ENCODE measurements at regions of chr20 and their contacts with region 1.

Region 1: GRCh38 chr20:53738039-53738944 is 144.7 kb upstream of the ZNF217 start:
- DNase-seq: peak; percentile 55 to 73 (median 68)
- ATAC-seq: peak; percentile 59 to 88 (median 86)
- H3K4me3 ChIP-seq: peak overlapping the region in 9 of 12 donors; percentile 0 to 29 (median 12)
- H3K27ac ChIP-seq: peak overlapping the region in 11 of 12 donors; percentile 47 to 82 (median 67)
- H3K4me1 ChIP-seq: peaks cover 3 to 64% (median 40%) of the 10 kb centered on the region in 12 donors
- H3K27me3 ChIP-seq: no peaks in the 10 kb centered on the region
- CTCF ChIP-seq: no peak
- POLR2A ChIP-seq: no peak

Region 2: DNA sequence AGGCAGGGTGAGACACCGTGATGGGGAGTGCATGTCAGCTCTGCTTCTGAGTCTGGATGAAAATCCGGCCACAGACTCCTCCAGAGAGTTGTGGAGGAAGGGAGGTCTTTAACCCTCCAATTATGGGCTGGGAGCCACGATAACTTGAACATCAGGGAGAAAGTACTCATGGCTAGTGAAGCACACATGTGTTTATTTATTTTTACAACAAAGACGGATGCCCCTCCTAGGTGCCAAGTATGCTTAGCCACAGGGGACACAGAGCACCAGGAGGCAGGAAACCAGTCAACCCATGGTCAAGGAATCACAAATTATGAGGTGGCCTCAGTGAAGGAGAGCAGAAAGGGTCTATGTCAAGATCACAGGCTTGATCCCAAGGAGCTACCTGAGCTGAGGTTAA is 198.8 kb before region 1 on chr20:
- intact Hi-C with region 1: no loop called
- DNase-seq: no peak
- ATAC-seq: no peak
- H3K4me3 ChIP-seq: no peak overlapping the region
- H3K27ac ChIP-seq: no peak overlapping the region
- H3K4me1 ChIP-seq: no peaks in the 10 kb centered on the region
- H3K27me3 ChIP-seq: no peaks in the 10 kb centered on the region
- CTCF ChIP-seq: no peak
- POLR2A ChIP-seq: no peak

Region 3: DNA sequence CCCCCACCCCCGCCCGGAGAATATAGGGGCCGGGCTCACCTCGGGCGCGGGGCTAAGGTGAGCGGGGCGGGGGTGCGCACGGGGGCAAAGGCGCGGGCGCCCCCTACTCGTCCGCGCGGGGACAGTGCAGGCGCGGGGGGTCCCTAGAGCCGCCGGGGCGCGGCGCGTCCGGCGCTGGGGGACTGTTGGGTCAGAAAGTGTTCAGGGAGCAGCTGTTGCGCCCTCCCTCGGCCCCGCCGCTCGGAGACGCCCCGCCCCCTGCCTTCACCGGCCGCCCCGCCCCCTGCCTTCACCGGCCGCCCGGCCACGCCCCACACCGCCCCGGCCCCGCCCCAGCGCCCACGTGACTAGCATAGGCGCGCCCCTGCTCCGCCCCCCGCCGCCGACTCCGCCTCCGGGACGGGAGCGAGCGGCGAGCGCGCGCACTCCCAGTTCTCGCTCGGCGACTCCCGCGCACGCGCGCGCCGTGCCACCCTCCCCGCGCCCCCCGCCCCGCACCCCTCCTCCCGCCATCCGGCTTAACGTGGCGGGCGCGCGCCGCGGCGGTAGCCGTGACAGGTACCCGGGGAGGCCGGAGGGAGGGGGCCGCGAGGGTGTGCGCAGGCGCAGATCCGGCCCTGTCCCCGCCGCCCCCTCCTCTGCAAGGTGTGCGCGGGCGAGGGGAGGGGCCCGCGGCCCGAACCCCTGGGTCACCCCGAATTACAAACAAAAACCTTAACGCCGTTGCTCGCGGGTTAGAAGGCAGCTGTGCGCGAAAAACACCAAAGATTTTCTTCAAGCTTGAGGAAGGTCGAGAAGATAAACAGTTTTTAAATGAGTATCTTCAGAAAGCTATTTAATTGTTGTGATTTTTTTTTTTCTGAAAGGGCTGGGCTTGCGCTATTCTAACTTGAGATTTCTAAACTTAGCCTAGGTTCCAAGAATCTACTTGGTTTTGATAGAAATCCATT is 143.9 kb before region 1 on chr20:
- intact Hi-C with region 1: loop called in 4 of 10 experiments (anchors 5 to 10 kb)
- DNase-seq: peak; percentile 96 to 100 (median 98)
- ATAC-seq: peak; percentile 88 to 96 (median 90)
- H3K4me3 ChIP-seq: peak overlapping the region; percentile 63 to 96 (median 94)
- H3K27ac ChIP-seq: peak overlapping the region; percentile 90 to 100 (median 99)
- H3K4me1 ChIP-seq: peaks cover 0 to 57% (median 18%) of the 10 kb centered on the region in 12 donors
- H3K27me3 ChIP-seq: no peaks in the 10 kb centered on the region
- CTCF ChIP-seq: peak in 11 of 12 donors; percentile 12 to 59 (median 30)
- POLR2A ChIP-seq: peak; percentile 64 to 85

Region 4: GRCh38 chr20:53623454-53624211 is 114.7 kb before region 1 on chr20:
- intact Hi-C with region 1: loop called in 2 of 10 experiments (anchors 10 kb)
- DNase-seq: peak in 4 of 5 donors; percentile 67 to 76 (median 72)
- ATAC-seq: peak; percentile 84 to 94 (median 92)
- H3K4me3 ChIP-seq: peak overlapping the region in 11 of 12 donors; percentile 26 to 57 (median 51)
- H3K27ac ChIP-seq: peak overlapping the region; percentile 71 to 91 (median 82)
- H3K4me1 ChIP-seq: peaks cover 12 to 60% (median 27%) of the 10 kb centered on the region in 12 donors
- H3K27me3 ChIP-seq: no peaks in the 10 kb centered on the region
- CTCF ChIP-seq: peak in 1 of 12 donors; percentile 22
- POLR2A ChIP-seq: peak in 1 of 2 donors; percentile 34

Region 5: DNA sequence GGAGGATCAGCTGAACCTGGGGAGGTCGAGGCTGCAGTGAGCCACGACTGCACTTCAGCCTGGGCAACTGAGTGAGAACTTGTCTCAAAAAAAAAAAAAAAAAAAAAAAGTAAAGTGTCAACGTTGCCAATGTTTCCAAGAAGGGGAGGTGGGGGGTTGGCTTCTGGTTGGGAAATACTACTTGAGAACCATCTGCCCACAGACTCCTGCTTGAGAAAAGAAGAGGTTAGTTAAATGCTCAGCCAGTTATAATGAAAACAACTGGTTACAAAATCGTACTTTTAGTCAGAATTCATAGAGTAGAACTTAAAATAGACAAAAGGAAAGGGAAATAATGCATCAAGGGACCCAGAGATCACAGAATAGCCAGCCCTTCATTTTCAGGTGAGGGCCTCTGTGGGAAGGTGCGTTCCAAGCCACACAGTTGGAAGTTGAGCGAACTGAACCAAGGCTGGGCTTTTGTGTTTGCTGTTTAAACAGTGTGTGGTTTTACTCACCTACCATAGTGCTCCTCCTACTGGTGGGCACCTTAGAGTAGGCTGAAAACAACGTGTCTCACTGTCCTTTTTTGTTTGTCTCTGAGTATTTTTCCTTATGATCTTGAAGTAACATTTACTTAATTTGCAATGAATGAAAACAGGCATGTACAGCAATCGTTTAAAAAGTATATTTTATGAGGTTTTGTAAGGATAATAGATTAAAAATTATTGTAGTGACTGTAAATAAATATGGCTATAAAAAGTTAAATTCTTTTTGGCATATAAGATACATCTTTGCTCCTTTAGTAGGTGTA is 131.4 kb after region 1 on chr20:
- intact Hi-C with region 1: loop called in 1 of 10 experiments (anchors 5 kb)
- DNase-seq: peak in 4 of 5 donors; percentile 54 to 67 (median 61)
- ATAC-seq: peak; percentile 72 to 94 (median 87)
- H3K4me3 ChIP-seq: peak overlapping the region in 1 of 12 donors; percentile 13
- H3K27ac ChIP-seq: peak overlapping the region in 4 of 12 donors; percentile 20 to 65 (median 52)
- H3K4me1 ChIP-seq: peaks cover 0 to 62% (median 22%) of the 10 kb centered on the region in 12 donors
- H3K27me3 ChIP-seq: no peaks in the 10 kb centered on the region
- CTCF ChIP-seq: peak; percentile 60 to 86 (median 76)
- POLR2A ChIP-seq: no peak

Region 6: DNA sequence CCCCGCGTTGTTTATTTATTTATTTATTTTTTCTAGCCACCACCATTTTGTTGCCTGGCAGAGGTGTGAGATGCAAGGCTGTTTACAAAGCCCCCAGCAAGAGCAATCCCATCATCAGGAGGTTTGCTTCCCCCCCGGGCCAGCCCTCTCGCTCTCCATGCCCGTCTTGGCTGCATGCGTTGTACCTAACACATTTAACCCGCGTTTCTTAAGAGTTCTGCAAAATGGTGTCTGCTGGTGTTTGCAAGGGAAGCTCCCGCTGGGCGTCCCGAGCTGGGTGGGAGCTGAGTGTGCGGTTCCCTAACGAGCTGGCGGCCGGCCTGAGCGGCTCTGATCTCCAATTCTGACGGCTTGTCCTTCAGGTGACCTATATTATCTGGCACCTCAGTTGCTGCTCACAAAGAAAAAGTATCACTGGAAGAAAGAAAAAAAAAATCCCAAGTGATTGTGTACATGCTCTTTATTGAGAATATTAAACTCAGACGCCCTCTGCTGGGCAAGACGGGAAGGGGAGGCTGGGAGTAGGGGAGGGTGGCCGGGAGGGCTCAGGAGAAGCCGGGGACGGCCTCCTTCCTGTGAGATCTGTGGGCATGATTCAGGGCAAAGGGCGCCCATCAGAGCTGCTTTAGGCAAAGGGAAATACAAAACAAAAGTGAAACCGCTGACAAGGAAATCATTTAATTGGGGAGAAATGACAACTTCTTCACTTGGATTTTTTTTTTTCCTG is 177.3 kb after region 1 on chr20:
- intact Hi-C with region 1: loop called in 1 of 10 experiments (anchors 5 kb)
- DNase-seq: peak; percentile 94 to 97 (median 95)
- ATAC-seq: peak; percentile 86 to 92 (median 90)
- H3K4me3 ChIP-seq: peak overlapping the region; percentile 53 to 80 (median 66)
- H3K27ac ChIP-seq: peak overlapping the region; percentile 79 to 94 (median 88)
- H3K4me1 ChIP-seq: peaks cover 0 to 46% (median 29%) of the 10 kb centered on the region in 12 donors
- H3K27me3 ChIP-seq: no peaks in the 10 kb centered on the region
- CTCF ChIP-seq: peak; percentile 79 to 98 (median 88)
- POLR2A ChIP-seq: no peak

Region 7: GRCh38 chr20:54340667-54341081 is 602.4 kb after region 1 on chr20:
- intact Hi-C with region 1: no loop called
- DNase-seq: no peak
- ATAC-seq: peak in 2 of 4 donors; percentile 20 to 49
- H3K4me3 ChIP-seq: no peak overlapping the region
- H3K27ac ChIP-seq: peak overlapping the region in 1 of 12 donors; percentile 37
- H3K4me1 ChIP-seq: peaks cover 0 to 10% (median 0%) of the 10 kb centered on the region in 12 donors
- H3K27me3 ChIP-seq: no peaks in the 10 kb centered on the region
- CTCF ChIP-seq: no peak
- POLR2A ChIP-seq: no peak